Activated T-helper 1 cell treated with anti-CD3 and anti-CD28 coated beads, Interleukin-12 subunit alpha, Interleukin-12 subunit beta, Interleukin-2, Interleukin-4 antibody, amounts not matched to agents 30 ng/mL and 10 ng/mL and 1 ng/mL, durations not matched to agents 14 hours and 24 hours and 36 hours (primary cell): ENCODE measurements at regions of chr6 and their contacts with region 1.

Region 1: DNA sequence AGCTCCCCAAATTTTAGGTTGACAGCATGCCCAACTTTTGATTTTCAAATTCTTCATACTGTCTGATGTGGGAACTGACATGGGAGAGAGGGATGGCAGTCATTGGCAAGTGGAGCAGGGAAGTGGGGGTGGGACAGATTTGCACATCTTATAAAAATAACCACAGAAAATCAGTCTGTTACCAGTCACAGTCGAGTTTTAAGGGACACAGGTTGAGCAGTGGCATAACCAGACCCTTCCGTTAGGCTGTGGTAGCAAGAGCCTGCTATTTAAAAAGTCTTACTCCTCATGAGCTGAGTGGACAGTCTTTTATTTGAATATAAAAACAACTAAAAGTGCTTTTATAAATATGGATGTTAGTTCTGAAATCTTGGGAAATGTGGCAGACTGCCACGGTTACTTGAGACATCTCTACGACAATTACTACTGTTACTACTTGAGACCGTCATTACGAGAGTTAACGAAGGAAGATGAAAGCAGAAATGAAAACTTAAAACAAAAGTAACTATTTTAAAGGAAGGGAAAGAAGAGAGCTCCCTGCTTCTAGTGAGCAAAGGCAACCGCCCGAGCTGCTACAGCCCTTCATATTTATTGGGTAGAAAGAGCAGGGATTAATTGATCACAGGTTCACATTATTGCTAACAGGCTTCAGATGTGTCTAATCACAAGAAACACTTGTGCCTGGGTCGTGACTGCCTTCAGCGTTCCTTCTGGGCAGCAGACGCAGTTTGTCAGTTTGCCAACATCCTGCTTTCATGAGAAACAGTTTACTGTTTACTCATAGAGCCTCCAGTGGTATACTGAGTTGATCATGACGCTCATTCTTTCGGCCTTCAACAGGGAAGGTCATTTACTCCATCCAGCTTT is 71.3 kb downstream of the EFHC1 start:
- DNase-seq: no peak
- H3K4me3 Mint-ChIP-seq: no peak overlapping the region
- H3K27ac Mint-ChIP-seq: no peak overlapping the region
- H3K4me1 Mint-ChIP-seq: peaks cover 28% of the 10 kb centered on the region
- H3K27me3 Mint-ChIP-seq: peaks cover 10% of the 10 kb centered on the region

Region 2: DNA sequence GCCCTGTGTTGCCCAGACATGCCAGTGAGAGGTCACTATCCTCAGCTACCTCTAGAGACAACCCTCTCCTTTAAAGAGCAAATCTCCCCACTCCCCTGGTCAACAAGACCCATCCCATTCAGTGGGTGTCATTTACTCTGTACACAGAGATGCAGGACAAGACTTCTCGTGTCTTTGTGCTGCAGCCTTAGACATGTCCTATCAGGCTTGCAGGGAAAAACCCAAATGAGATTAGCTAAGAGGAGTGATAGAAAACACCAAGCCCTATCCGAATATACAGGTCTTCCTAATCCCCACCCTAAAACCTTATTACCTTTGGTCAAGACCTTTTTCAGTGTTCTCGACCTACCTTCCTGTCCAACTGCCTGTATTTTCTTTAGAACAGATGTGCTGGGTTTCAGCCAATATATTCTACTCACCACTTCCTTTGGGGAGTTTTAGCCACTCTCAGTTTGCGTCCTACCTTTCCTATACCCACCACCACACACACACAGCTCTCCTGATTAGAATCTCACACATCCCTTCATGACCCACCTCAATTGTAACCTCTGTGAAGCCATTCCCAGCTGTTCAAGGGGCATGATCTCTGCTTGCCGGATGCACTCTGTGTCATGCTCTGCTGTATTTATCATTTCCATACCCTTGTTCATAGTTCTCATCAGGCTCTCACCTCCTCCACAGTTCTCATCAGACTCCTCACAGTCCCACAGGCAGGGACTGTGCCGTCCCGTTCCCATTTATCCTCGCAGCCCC is 45.7 kb after region 1 on chr6:
- intact Hi-C with region 1: loop called (anchors 5 kb)
- DNase-seq: no peak
- H3K4me3 Mint-ChIP-seq: peak overlapping the region; percentile 19
- H3K27ac Mint-ChIP-seq: peak overlapping the region; percentile 56
- H3K4me1 Mint-ChIP-seq: peaks cover 38% of the 10 kb centered on the region
- H3K27me3 Mint-ChIP-seq: no peaks in the 10 kb centered on the region